ENCODE measurements at regions of chr17 and their contacts with region 1.

Region 1: DNA sequence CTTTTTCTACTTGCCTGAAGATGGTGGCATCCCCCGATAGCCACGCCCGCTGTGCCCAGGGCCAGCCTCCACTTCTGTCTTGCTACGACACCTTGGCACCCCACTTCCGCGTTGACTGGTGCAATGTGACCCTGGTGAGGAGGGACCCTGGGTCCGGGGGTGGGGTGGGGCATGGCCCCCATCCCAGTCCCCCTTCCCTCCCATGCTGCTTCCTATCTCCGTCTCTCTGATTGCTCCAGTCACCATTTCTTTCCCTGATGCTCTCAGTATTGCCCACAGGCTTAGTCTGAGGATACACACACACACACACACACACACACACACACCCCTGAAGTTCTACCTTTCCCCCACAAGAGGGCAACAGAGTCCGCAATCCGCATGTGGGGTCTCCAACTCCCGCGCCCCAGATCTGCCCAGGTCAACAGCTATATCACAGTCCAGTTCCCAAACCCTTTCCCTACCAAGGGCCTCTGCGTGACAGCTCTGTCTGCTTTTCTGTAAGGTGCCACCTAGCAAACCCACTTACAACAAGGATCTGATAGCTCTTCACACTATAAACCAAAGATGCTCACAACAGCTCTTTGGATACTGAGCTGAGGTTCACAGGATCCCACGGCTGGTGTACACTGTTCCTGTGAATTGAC is 3.4 kb downstream of the SGCA start:
- DNase-seq: peak; percentile 41 to 76 (median 65)
- ATAC-seq: peak; percentile 79 to 89 (median 84)
- H3K4me3 ChIP-seq: peak overlapping the region in 1 of 2 donors; percentile 40
- H3K4me3 Mint-ChIP-seq: peak overlapping the region; percentile 54 to 70 (median 56)
- H3K27ac ChIP-seq: peak overlapping the region; percentile 56
- H3K27ac Mint-ChIP-seq: peak overlapping the region; percentile 73 to 88
- H3K4me1 ChIP-seq: peaks cover 0 to 18% of the 10 kb centered on the region in 2 experiments
- H3K4me1 Mint-ChIP-seq: peaks cover 12 to 14% (median 13%) of the 10 kb centered on the region in 3 donors
- H3K27me3 ChIP-seq: peaks cover 0 to 24% of the 10 kb centered on the region in 2 experiments
- H3K27me3 Mint-ChIP-seq: no peaks in the 10 kb centered on the region

Region 2: GRCh38 chr17:50123649-50124349 is 45.4 kb before region 1 on chr17:
- CTCF ChIA-PET with region 1: no interaction called
- POLR2A ChIA-PET with region 1: no interaction called
- DNase-seq: no peak
- ATAC-seq: no peak
- H3K4me3 ChIP-seq: no peak overlapping the region
- H3K4me3 Mint-ChIP-seq: no peak overlapping the region
- H3K27ac ChIP-seq: no peak overlapping the region
- H3K27ac Mint-ChIP-seq: no peak overlapping the region
- H3K4me1 ChIP-seq: peaks cover 2 to 9% of the 10 kb centered on the region in 2 experiments
- H3K4me1 Mint-ChIP-seq: peaks cover 4 to 10% (median 10%) of the 10 kb centered on the region in 3 donors
- H3K27me3 ChIP-seq: peaks cover 0 to 24% of the 10 kb centered on the region in 2 experiments
- H3K27me3 Mint-ChIP-seq: peaks cover 16 to 33% of the 10 kb centered on the region in 2 donors

Region 3: GRCh38 chr17:50297407-50297865 is 128.2 kb after region 1 on chr17:
- CTCF ChIA-PET with region 1: interaction called, 6 to 13 read pairs
- POLR2A ChIA-PET with region 1: no interaction called
- DNase-seq: peak; percentile 48 to 83 (median 71)
- ATAC-seq: peak; percentile 86 to 99 (median 94)
- H3K4me3 ChIP-seq: no peak overlapping the region
- H3K4me3 Mint-ChIP-seq: no peak overlapping the region
- H3K27ac ChIP-seq: no peak overlapping the region
- H3K27ac Mint-ChIP-seq: no peak overlapping the region
- H3K4me1 ChIP-seq: no peaks in the 10 kb centered on the region
- H3K4me1 Mint-ChIP-seq: no peaks in the 10 kb centered on the region
- H3K27me3 ChIP-seq: peaks cover 0 to 18% of the 10 kb centered on the region in 2 experiments
- H3K27me3 Mint-ChIP-seq: peaks cover 5 to 12% of the 10 kb centered on the region in 2 donors

Measured in T-cell (primary cell).